ENCODE measurements at regions of chr11 and their contacts with region 1.

Region 1: DNA sequence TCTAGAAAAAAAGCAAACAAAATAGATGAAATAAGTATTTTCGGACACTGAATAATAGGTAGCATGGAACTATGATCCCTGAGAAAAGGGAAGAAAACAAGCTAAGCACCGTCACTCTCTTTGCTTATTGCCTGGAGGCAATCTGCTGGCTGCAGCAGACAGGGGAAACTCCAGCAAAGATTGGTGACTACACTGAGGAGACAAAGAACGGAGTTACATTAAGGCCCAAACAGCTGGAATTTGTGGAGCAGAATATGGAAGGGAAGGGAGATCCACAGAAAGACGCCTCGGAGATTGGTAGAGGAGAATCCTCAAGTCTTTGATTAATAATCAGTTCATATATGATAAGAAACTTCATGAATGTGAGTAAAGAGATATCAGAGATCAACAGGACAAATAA is 150.2 kb downstream of the TYR start:
- DNase-seq: no peak
- ATAC-seq: no peak
- H3K4me3 ChIP-seq: no peak overlapping the region
- H3K27ac ChIP-seq: no peak overlapping the region
- H3K4me1 ChIP-seq: no peaks in the 10 kb centered on the region
- H3K27me3 ChIP-seq: no peaks in the 10 kb centered on the region
- CTCF ChIP-seq: no peak
- POLR2A ChIP-seq: no peak

Region 2: DNA sequence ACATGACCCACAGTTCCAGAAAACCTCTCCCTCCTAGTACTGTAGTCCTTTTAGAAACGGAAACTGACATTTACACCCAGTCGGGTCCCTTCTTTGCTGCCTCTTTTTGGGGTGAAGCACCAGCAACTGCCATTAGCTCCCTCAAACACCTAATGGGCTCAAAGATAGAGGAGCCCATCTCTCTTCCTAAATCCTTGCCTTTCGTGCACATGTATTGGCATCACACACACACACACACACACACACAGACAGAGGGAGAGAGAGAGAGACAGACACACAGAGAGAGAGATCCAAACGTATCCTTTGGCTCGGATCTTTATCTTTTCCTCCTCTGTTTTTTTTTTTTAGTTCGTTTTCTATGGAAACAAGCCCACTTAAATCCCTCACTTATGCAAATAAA is 262.8 kb before region 1 on chr11:
- in situ Hi-C with region 1: no loop called
- intact Hi-C with region 1: no loop called
- DNase-seq: no peak
- ATAC-seq: no peak
- H3K4me3 ChIP-seq: no peak overlapping the region
- H3K27ac ChIP-seq: no peak overlapping the region
- H3K4me1 ChIP-seq: no peaks in the 10 kb centered on the region
- H3K27me3 ChIP-seq: peaks cover 0 to 4% (median 3%) of the 10 kb centered on the region in 3 donors
- CTCF ChIP-seq: no peak
- POLR2A ChIP-seq: no peak

Region 3: GRCh38 chr11:89613911-89614310 is 286.0 kb after region 1 on chr11:
- in situ Hi-C with region 1: no loop called
- intact Hi-C with region 1: loop called (anchors 10 kb)
- DNase-seq: no peak
- ATAC-seq: no peak
- H3K4me3 ChIP-seq: no peak overlapping the region
- H3K27ac ChIP-seq: no peak overlapping the region
- H3K4me1 ChIP-seq: no peaks in the 10 kb centered on the region
- H3K27me3 ChIP-seq: no peaks in the 10 kb centered on the region
- CTCF ChIP-seq: no peak
- POLR2A ChIP-seq: no peak

Measured in gastrocnemius medialis (tissue), 4 donors.